Esophagus muscularis mucosa (tissue), 4 donors: ENCODE measurements at regions of chr5 and their contacts with region 1.

Region 1: GRCh38 chr5:134784241-134784920 is 25.8 kb downstream of the DDX46 start:
- DNase-seq: no peak
- H3K4me3 ChIP-seq: no peak overlapping the region
- H3K27ac ChIP-seq: peak overlapping the region in 1 of 4 donors; percentile 40
- H3K4me1 ChIP-seq: peaks cover 0 to 9% (median 5%) of the 10 kb centered on the region in 4 donors
- H3K27me3 ChIP-seq: no peaks in the 10 kb centered on the region
- CTCF ChIP-seq: peak; percentile 14 to 36 (median 34)
- EP300 ChIP-seq: no peak
- POLR2A ChIP-seq: no peak

Region 2: GRCh38 chr5:134724872-134725271 is 59.5 kb before region 1 on chr5:
- intact Hi-C with region 1: loop called (anchors 10 kb)
- DNase-seq: no peak
- H3K4me3 ChIP-seq: no peak overlapping the region
- H3K27ac ChIP-seq: no peak overlapping the region
- H3K4me1 ChIP-seq: no peaks in the 10 kb centered on the region
- H3K27me3 ChIP-seq: no peaks in the 10 kb centered on the region
- CTCF ChIP-seq: no peak
- EP300 ChIP-seq: no peak
- POLR2A ChIP-seq: no peak

Region 3: GRCh38 chr5:134738133-134738962 is 46.0 kb before region 1 on chr5 and contains the start of gene CAMLG:
- intact Hi-C with region 1: no loop called
- DNase-seq: peak; percentile 99
- H3K4me3 ChIP-seq: peak within 1 kb of the TSS; percentile 74 to 90 (median 82)
- H3K27ac ChIP-seq: peak within 1 kb of the TSS; percentile 92 to 98 (median 94)
- H3K4me1 ChIP-seq: peaks cover 16 to 46% (median 37%) of the 10 kb centered on the region in 4 donors
- H3K27me3 ChIP-seq: no peaks in the 10 kb centered on the region
- CTCF ChIP-seq: peak; percentile 21 to 49 (median 38)
- EP300 ChIP-seq: no peak
- POLR2A ChIP-seq: peak; percentile 95
- total RNA-seq, gene CAMLG: 38.5 to 54.4 (median 49.8) TPM